Common myeloid progenitor, CD34-positive (primary cell): ENCODE measurements at regions of chr10 and their contacts with region 1.

Region 1: DNA sequence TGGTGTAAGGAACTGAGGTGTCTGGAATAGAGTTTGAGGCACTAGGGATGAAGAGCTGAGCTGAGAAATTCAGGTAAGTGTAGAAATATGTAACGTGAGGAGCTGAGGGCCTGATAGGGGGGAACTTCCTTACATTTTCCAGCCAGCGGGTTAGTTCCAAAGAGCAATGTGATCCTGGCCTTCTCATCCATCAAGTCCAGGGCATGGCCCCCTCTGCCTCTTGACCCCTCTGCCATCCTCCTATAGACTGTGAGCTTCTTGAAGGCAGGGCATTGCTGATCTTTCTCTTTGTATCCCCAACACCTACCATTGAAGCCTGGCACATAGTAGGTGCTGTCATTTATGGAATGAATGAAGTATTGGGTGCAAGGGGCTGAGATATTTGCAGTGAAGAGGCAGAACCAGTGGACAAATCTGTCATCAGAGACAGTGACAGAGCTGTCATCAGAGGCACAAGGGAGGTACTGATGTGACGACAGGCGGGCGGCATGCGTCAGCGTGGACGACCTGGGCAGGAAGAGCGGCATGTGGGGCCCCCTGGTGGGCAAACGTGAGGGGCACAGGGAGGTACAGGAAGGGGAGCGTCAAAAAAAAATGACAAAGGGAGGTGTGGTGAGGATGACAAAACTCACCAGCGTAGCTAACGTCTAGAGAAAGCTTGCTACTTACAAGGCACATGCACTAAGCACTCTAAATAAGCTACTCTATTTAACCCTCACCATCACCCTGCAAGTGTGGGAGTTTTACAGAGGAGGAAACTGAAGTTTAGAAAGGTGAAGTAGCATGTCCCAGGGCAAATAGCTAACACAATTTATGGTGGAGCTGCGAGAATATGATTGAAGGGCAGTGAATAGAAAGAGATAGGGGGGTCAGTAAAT is 5.2 kb upstream of the CAMK2G start:
- DNase-seq: peak; percentile 94 to 96 (median 95)
- H3K4me3 ChIP-seq: peak overlapping the region in 1 of 7 experiments; percentile 44
- H3K27ac ChIP-seq: no peak overlapping the region
- H3K4me1 ChIP-seq: peaks cover 5 to 48% (median 23%) of the 10 kb centered on the region in 4 experiments
- H3K27me3 ChIP-seq: no peaks in the 10 kb centered on the region

Region 2: DNA sequence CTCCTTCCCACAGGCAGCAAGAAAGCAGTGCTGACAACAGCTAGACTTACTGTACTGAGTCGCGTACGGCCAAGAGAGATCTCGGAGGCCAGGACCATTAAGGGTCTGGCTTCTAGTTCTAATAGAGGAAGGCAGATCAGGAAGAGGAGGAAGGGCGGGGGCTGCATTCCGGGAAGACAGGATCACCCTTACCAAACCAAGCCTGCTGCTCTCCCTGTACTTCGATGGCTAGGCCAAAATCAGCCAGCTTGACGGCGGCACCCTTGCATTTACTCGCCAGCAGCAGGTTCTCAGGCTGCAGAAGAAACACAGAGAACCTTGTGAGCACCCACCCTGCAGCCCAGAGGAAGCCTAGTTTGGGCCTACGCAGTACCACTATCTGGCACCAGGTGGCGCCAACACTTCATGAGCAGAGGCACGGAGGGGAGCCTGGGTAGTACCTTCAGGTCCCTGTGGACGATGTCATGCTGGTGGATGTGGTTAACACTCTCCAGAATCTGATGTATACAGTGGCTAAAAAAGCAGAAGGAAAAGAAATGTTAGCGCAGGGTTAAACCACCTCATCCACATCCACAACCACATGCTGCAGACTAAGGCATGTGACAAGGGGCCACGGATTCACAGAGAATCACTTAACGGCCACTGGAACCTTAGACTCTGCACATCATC is 30.6 kb before region 1 on chr10:
- CTCF ChIA-PET with region 1: interaction called, 452 read pairs
- POLR2A ChIA-PET with region 1: interaction called, 4 read pairs
- DNase-seq: peak; percentile 97 to 99 (median 99)
- H3K4me3 ChIP-seq: peak overlapping the region in 1 of 7 experiments; percentile 23
- H3K27ac ChIP-seq: no peak overlapping the region
- H3K4me1 ChIP-seq: peaks cover 7 to 31% (median 19%) of the 10 kb centered on the region in 4 experiments
- H3K27me3 ChIP-seq: no peaks in the 10 kb centered on the region

Region 3: GRCh38 chr10:73865459-73866442 is 13.8 kb before region 1 on chr10:
- CTCF ChIA-PET with region 1: interaction called, 240 read pairs
- POLR2A ChIA-PET with region 1: interaction called, 5 read pairs
- DNase-seq: peak; percentile 82 to 96 (median 95)
- H3K4me3 ChIP-seq: peak overlapping the region in 5 of 7 experiments; percentile 6 to 68 (median 46)
- H3K27ac ChIP-seq: peak overlapping the region; percentile 33 to 81
- H3K4me1 ChIP-seq: peaks cover 26 to 92% (median 82%) of the 10 kb centered on the region in 4 experiments
- H3K27me3 ChIP-seq: no peaks in the 10 kb centered on the region

Region 4: GRCh38 chr10:73899423-73899822 is 19.9 kb after region 1 on chr10:
- CTCF ChIA-PET with region 1: interaction called, 17 read pairs
- POLR2A ChIA-PET with region 1: no interaction called
- DNase-seq: peak in 2 of 3 donors; percentile 55 to 66
- H3K4me3 ChIP-seq: no peak overlapping the region
- H3K27ac ChIP-seq: no peak overlapping the region
- H3K4me1 ChIP-seq: peaks cover 5 to 42% (median 7%) of the 10 kb centered on the region in 4 experiments
- H3K27me3 ChIP-seq: no peaks in the 10 kb centered on the region

Region 5: DNA sequence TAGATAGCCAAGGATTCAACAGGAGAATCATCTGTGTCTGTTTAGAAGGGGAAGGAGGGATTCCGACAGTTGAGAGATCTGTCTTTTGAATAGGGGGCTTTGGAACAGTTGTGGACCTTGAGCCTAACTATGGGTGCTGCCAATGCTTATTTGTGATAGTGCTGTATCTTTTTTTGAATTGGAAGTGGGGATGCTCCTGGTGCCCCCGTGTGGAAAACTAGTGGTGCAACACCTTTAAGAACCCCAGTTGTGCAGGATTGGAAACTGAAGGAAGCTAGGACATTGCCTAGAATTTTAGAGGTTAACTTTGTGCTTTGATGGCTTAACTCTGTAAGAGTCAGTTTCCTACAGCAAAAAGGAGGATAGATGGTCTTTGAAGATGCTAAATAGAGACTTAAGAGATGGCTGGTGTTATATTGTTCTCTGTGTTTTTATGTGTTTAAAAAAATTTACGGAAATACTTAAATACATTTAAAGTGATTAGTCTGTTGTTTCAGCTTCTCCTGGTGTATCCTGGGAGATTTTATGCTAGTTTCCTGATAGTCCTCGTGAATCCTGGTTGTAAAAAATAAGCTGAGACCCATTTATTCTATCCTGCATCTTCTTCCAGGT is 201.8 kb after region 1 on chr10:
- CTCF ChIA-PET with region 1: interaction called, 11 read pairs
- POLR2A ChIA-PET with region 1: no interaction called
- DNase-seq: peak; percentile 59 to 72 (median 64)
- H3K4me3 ChIP-seq: no peak overlapping the region
- H3K27ac ChIP-seq: no peak overlapping the region
- H3K4me1 ChIP-seq: peaks cover 4 to 32% (median 11%) of the 10 kb centered on the region in 4 experiments
- H3K27me3 ChIP-seq: no peaks in the 10 kb centered on the region